ENCODE measurements at regions of chr19 and their contacts with region 1.

Region 1: GRCh38 chr19:860481-861101 is 1.1 kb downstream of the CFD start:
- DNase-seq: peak in 1 of 2 donors; percentile 76
- ATAC-seq: peak; percentile 74
- H3K4me3 ChIP-seq: no peak overlapping the region
- H3K27ac ChIP-seq: no peak overlapping the region
- H3K4me1 ChIP-seq: no peaks in the 10 kb centered on the region
- H3K27me3 ChIP-seq: peaks cover 0 to 3% of the 10 kb centered on the region in 2 donors

Region 2: DNA sequence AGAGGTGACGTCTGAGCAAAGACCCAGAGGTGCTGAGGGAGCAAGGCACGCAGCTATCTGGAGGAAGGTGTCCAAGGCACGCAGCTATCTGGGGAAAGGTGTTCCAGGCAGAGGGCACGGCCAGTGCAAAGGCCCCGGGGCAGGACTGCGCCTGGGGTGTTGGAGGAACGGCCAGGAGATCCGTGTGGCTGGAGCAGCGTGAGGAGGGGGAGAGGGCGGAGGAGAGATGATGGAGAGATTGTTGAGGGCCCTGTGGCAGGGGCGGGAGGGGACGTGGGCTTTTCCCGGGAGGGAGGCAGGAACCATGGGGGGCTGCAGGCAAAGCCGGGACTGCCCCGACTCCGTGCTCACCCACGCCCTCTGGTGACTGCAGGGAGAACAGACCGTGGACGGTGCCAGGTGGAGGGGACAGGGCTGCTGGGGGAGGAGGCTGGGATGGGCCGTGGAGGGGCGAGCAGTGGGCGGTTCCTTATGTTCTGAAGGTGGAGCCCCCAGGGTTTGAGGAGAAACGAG is 123.0 kb before region 1 on chr19:
- intact Hi-C with region 1: no loop called
- DNase-seq: peak in 1 of 2 donors; percentile 85
- ATAC-seq: peak; percentile 67
- H3K4me3 ChIP-seq: no peak overlapping the region
- H3K27ac ChIP-seq: no peak overlapping the region
- H3K4me1 ChIP-seq: no peaks in the 10 kb centered on the region
- H3K27me3 ChIP-seq: no peaks in the 10 kb centered on the region

Region 3: GRCh38 chr19:835210-835810 is 25.3 kb before region 1 on chr19:
- intact Hi-C with region 1: no loop called
- DNase-seq: peak in 1 of 2 donors; percentile 81
- ATAC-seq: peak; percentile 84
- H3K4me3 ChIP-seq: no peak overlapping the region
- H3K27ac ChIP-seq: no peak overlapping the region
- H3K4me1 ChIP-seq: no peaks in the 10 kb centered on the region
- H3K27me3 ChIP-seq: no peaks in the 10 kb centered on the region

Region 4: DNA sequence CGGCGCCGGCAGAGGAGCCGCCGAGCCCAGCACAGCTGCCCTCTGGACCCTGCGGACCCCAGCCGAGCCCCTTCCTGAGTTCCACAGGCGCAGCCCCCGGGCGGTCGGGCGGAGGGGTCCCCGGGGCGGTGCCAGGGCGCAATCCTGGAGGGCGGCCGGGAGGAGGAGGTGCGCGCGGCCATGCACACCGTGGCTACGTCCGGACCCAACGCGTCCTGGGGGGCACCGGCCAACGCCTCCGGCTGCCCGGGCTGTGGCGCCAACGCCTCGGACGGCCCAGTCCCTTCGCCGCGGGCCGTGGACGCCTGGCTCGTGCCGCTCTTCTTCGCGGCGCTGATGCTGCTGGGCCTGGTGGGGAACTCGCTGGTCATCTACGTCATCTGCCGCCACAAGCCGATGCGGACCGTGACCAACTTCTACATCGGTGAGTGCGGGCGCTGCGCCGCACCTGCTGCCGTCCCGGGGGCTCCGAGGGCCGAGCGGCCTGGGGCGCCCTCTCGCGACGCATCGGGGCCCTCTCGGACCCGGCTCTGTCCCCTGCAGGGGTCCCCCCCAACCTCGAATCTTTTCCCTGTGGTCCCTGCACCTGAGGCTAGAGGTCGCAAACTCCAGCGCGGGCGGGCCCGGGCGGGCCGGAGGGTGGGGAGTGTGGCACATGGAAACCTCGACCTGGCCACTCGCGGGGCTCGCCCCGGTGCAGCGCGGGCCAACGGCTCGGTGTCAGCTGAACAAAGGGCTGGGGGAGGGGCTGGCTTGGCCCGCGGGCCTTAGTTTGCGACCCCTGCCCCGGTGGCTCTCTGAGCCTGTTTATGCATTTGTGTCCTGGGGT is 56.9 kb after region 1 on chr19 and contains the start of gene KISS1R:
- intact Hi-C with region 1: loop called (anchors 2 to 5 kb)
- DNase-seq: peak in 1 of 2 donors; percentile 82
- ATAC-seq: no peak
- H3K4me3 ChIP-seq: no peak within 1 kb of the TSS
- H3K27ac ChIP-seq: no peak within 1 kb of the TSS
- H3K4me1 ChIP-seq: no peaks in the 10 kb centered on the region
- H3K27me3 ChIP-seq: no peaks in the 10 kb centered on the region
- total RNA-seq, gene KISS1R: not detected

Region 5: DNA sequence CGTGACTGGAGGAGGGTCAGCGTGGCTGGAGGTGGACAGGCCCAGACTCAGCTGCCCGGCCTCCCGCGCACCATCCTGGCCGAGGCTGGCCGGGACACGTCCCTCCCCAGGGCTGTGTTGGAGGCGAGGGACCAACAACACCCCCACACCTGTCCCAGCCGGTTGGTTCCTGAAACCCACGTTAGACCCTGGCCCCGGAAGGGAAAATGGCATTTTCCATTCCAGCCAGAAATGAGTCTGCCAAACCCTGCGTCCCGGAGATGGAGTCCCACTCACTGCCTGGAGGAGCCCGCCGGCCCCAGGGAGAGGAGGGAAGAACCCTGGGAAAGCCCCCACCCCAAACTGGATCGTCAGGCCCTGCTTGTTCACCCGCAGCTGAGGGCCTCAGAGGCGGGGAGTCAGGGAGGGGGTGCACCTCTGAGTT is 118.7 kb after region 1 on chr19:
- intact Hi-C with region 1: loop called (anchors 2 to 5 kb)
- DNase-seq: no peak
- ATAC-seq: no peak
- H3K4me3 ChIP-seq: no peak overlapping the region
- H3K27ac ChIP-seq: no peak overlapping the region
- H3K4me1 ChIP-seq: no peaks in the 10 kb centered on the region
- H3K27me3 ChIP-seq: no peaks in the 10 kb centered on the region

Region 6: GRCh38 chr19:984165-984967 is 123.8 kb after region 1 on chr19 and contains the start of gene WDR18:
- intact Hi-C with region 1: loop called (anchors 2 to 5 kb)
- DNase-seq: peak; percentile 96 to 99
- ATAC-seq: peak; percentile 95
- H3K4me3 ChIP-seq: peak within 1 kb of the TSS; percentile 44 to 80
- H3K27ac ChIP-seq: peak within 1 kb of the TSS in 1 of 2 donors; percentile 79
- H3K4me1 ChIP-seq: no peaks in the 10 kb centered on the region
- H3K27me3 ChIP-seq: no peaks in the 10 kb centered on the region
- total RNA-seq, gene WDR18: 15.5 to 16.1 TPM

Measured in aorta (tissue), 5 donors.